Transverse colon (tissue), 4 donors: ENCODE measurements at regions of chr1 and their contacts with region 1.

Region 1: DNA sequence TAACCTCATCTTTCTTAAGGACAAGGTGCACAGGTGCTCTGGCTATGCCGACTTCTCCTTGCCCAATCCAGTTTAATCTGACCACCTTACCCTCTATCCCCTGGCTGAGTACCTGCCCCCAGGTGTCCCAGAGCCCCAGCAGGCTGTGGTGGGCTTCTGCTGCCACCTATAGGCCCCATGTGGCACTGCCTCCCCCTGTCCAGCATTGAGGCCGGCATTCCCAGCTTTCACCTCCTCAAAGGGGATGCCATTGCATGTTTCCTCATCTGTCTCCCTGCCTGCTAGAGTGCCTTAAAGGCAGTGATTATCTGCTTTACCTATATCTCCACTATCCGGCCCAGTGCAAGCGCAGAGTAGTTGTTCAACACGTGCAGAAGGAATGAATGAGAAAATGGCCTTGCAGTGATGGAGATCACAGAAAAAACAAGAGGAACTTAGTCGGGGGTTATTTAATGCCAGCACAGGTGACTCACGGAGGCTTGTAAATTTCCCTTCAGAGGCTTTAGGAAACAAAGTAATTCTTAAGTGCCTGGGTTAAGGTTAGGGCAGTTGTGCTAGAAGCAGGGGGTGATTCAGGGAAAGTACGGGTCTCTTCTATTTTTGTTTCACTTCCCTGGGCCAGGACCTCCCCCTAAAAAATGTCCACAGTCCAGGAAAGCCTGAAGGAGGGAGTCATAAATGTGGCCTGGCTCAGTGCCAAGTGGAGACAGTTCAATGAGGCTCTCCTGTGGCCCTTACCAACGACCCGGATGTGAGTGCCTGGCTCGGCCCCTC is 131.8 kb upstream of the NGF start:
- DNase-seq: peak; percentile 43
- H3K4me3 ChIP-seq: no peak overlapping the region
- H3K27ac ChIP-seq: peak overlapping the region in 1 of 4 donors; percentile 13
- H3K4me1 ChIP-seq: peaks cover 0 to 7% (median 0%) of the 10 kb centered on the region in 4 donors
- H3K27me3 ChIP-seq: no peaks in the 10 kb centered on the region
- CTCF ChIP-seq: peak; percentile 75 to 90 (median 83)
- EP300 ChIP-seq: no peak
- POLR2A ChIP-seq: no peak

Region 2: DNA sequence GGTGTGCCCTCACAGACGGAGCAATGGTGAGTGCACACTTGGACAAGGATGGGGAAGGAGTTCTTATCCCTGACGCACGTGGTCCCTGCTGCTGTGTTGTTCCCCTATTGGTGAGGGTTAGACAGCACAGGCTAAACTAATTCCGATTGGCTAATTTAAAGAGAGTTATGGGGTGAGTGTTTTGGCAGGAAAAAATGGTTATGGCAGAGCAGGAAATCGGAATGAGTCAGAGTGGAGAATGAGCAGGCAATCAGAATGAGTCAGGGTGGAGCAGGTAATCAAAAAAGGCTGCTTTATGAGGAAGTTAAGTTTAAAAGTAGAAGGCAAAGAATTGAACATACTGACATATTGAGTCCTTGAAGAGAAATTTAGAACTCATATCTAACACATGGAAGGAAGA is 232.4 kb before region 1 on chr1:
- in situ Hi-C with region 1: no loop called
- intact Hi-C with region 1: no loop called
- DNase-seq: no peak
- H3K4me3 ChIP-seq: no peak overlapping the region
- H3K27ac ChIP-seq: peak overlapping the region in 1 of 4 donors; percentile 3
- H3K4me1 ChIP-seq: no peaks in the 10 kb centered on the region
- H3K27me3 ChIP-seq: no peaks in the 10 kb centered on the region
- CTCF ChIP-seq: no peak
- EP300 ChIP-seq: no peak
- POLR2A ChIP-seq: no peak

Region 3: DNA sequence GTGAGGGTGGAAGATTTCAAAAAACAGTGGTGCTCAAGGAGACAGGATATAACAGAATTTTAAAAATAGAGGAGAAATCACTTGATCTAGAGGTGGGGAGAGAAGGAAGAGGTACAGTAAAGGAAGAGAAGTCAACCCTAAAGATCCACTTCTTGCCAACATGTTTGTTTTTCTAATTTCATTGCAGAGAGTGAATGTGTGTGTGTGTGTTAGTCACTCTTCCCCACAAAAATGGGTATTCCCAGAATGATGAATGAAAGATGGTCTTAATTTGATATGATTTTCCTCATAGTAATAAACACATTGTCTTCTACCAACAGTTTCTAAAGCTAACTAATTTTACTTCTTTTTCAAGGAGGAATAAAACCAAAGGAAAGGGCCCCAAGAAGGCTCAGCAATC is 57.6 kb before region 1 on chr1:
- in situ Hi-C with region 1: no loop called
- intact Hi-C with region 1: no loop called
- DNase-seq: no peak
- H3K4me3 ChIP-seq: no peak overlapping the region
- H3K27ac ChIP-seq: no peak overlapping the region
- H3K4me1 ChIP-seq: no peaks in the 10 kb centered on the region
- H3K27me3 ChIP-seq: no peaks in the 10 kb centered on the region
- CTCF ChIP-seq: no peak
- EP300 ChIP-seq: no peak
- POLR2A ChIP-seq: no peak

Region 4: DNA sequence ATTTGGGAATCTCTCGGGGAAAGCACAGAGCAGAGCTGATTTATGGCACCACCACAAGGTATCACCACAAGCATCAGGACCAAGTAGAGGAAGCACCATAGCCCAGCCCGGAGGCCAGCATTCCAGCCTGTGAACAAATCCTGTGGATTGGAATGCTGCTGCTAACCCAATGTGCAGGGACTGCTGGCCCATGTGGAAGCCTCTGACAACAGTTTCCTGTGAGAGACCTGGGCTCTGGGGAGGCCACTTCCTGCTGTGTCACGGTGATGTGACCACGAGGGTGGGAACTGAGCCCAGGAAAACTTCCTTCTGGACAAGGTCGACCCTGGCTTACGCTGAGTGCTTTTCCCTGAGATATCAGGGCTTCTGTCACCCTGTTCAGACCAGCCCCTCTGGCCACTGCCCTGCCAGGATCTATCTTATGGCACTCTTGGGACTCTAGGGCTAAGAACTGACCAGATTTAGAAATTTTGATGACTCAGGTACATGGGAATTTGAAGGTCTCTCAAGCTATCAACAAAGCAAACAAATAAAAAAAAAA is 43.6 kb before region 1 on chr1:
- in situ Hi-C with region 1: no loop called
- intact Hi-C with region 1: no loop called
- DNase-seq: no peak
- H3K4me3 ChIP-seq: no peak overlapping the region
- H3K27ac ChIP-seq: no peak overlapping the region
- H3K4me1 ChIP-seq: no peaks in the 10 kb centered on the region
- H3K27me3 ChIP-seq: no peaks in the 10 kb centered on the region
- CTCF ChIP-seq: no peak
- EP300 ChIP-seq: no peak
- POLR2A ChIP-seq: no peak

Region 5: GRCh38 chr1:115496904-115497527 is 27.1 kb after region 1 on chr1:
- in situ Hi-C with region 1: no loop called
- intact Hi-C with region 1: no loop called
- DNase-seq: no peak
- H3K4me3 ChIP-seq: no peak overlapping the region
- H3K27ac ChIP-seq: no peak overlapping the region
- H3K4me1 ChIP-seq: no peaks in the 10 kb centered on the region
- H3K27me3 ChIP-seq: no peaks in the 10 kb centered on the region
- CTCF ChIP-seq: no peak
- EP300 ChIP-seq: no peak
- POLR2A ChIP-seq: no peak

Region 6: GRCh38 chr1:115577513-115577912 is 107.6 kb after region 1 on chr1:
- in situ Hi-C with region 1: no loop called
- intact Hi-C with region 1: loop called (anchors 10 kb)
- DNase-seq: no peak
- H3K4me3 ChIP-seq: no peak overlapping the region
- H3K27ac ChIP-seq: no peak overlapping the region
- H3K4me1 ChIP-seq: no peaks in the 10 kb centered on the region
- H3K27me3 ChIP-seq: no peaks in the 10 kb centered on the region
- CTCF ChIP-seq: no peak
- EP300 ChIP-seq: no peak
- POLR2A ChIP-seq: no peak